ENCODE measurements at regions of chr2 and their contacts with region 1.

Region 1: DNA sequence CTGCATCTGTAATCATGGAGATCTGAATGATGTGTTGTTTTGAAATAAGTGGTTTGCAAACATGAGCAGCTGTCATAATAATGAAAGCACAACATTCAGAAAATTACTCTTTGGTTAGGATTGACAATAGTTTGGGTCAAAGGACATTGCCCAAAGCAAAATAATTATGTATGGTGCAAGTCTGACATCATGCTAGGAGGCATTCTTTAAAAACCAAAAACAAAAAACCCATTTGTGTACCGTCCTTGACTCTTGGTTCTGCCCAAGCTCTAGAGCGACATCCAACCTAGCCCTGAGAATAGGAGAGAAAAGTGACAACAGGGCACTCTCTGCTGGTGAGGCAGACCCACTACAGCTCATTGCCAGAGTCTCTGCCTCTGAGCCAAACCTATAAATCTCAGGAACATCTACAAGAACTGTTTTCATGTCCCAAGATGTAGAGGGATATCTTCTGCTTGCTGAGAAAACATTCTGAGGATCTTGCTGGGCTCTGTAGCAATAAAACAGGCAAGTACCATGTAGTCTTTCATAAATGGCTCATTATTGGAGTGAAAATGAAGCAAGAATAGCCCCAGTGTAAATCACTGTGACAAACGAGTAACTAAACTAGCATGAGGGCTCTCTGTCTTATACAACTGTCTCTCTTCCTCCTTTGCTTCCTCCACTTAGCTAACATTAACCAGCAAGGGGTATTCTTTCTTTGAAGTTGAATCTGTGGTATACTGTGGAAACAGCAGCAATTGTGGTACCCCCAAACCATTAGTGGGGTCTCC is 266.8 kb upstream of the CXCR4 start:
- DNase-seq: no peak
- ATAC-seq: peak; percentile 68
- H3K4me3 ChIP-seq: no peak overlapping the region
- H3K27ac ChIP-seq: no peak overlapping the region
- H3K4me1 ChIP-seq: peaks cover 21% of the 10 kb centered on the region
- H3K27me3 ChIP-seq: no peaks in the 10 kb centered on the region
- CTCF ChIP-seq: peak; percentile 83 to 92 (median 87)
- EP300 ChIP-seq: peak; percentile 28 to 37; a peak in 1 of 4 replicates
- POLR2A ChIP-seq: no peak
- RAD21 ChIP-seq: peak; percentile 91

Region 2: GRCh38 chr2:135473567-135473966 is 911.1 kb before region 1 on chr2:
- CTCF ChIA-PET with region 1: interaction called, 12 read pairs
- POLR2A ChIA-PET with region 1: no interaction called
- RAD21 ChIA-PET with region 1: interaction called, 6 read pairs
- SMC1A ChIA-PET with region 1: no interaction called
- in situ Hi-C with region 1: no loop called
- intact Hi-C with region 1: no loop called
- DNase-seq: peak; percentile 5
- ATAC-seq: peak; percentile 86
- H3K4me3 ChIP-seq: no peak overlapping the region
- H3K27ac ChIP-seq: no peak overlapping the region
- H3K4me1 ChIP-seq: no peaks in the 10 kb centered on the region
- H3K27me3 ChIP-seq: no peaks in the 10 kb centered on the region
- CTCF ChIP-seq: peak; percentile 52 to 76 (median 62)
- EP300 ChIP-seq: no peak
- POLR2A ChIP-seq: no peak
- RAD21 ChIP-seq: peak; percentile 85

Region 3: GRCh38 chr2:135870571-135870970 is 514.1 kb before region 1 on chr2:
- CTCF ChIA-PET with region 1: interaction called, 8 read pairs
- POLR2A ChIA-PET with region 1: interaction called, 5 read pairs
- RAD21 ChIA-PET with region 1: interaction called, 11 read pairs
- SMC1A ChIA-PET with region 1: interaction called, 10 read pairs
- in situ Hi-C with region 1: no loop called
- intact Hi-C with region 1: no loop called
- DNase-seq: no peak
- ATAC-seq: peak; percentile 63
- H3K4me3 ChIP-seq: no peak overlapping the region
- H3K27ac ChIP-seq: no peak overlapping the region
- H3K4me1 ChIP-seq: peaks cover 4% of the 10 kb centered on the region; the same call in 1 of the 2 replicates
- H3K27me3 ChIP-seq: no peaks in the 10 kb centered on the region
- CTCF ChIP-seq: no peak
- EP300 ChIP-seq: no peak
- POLR2A ChIP-seq: no peak
- RAD21 ChIP-seq: no peak

Region 4: GRCh38 chr2:135948642-135949355 is 435.9 kb before region 1 on chr2:
- CTCF ChIA-PET with region 1: interaction called, 6 read pairs
- POLR2A ChIA-PET with region 1: interaction called, 4 read pairs
- RAD21 ChIA-PET with region 1: interaction called, 4 read pairs
- SMC1A ChIA-PET with region 1: interaction called, 10 read pairs
- in situ Hi-C with region 1: no loop called
- intact Hi-C with region 1: no loop called
- DNase-seq: no peak
- ATAC-seq: peak; percentile 81
- H3K4me3 ChIP-seq: no peak overlapping the region
- H3K27ac ChIP-seq: no peak overlapping the region
- H3K4me1 ChIP-seq: peaks cover 3% of the 10 kb centered on the region
- H3K27me3 ChIP-seq: no peaks in the 10 kb centered on the region
- CTCF ChIP-seq: no peak
- EP300 ChIP-seq: peak in 1 of 2 experiments; percentile 78; a peak in 1 of 4 replicates
- POLR2A ChIP-seq: no peak
- RAD21 ChIP-seq: no peak

Region 5: DNA sequence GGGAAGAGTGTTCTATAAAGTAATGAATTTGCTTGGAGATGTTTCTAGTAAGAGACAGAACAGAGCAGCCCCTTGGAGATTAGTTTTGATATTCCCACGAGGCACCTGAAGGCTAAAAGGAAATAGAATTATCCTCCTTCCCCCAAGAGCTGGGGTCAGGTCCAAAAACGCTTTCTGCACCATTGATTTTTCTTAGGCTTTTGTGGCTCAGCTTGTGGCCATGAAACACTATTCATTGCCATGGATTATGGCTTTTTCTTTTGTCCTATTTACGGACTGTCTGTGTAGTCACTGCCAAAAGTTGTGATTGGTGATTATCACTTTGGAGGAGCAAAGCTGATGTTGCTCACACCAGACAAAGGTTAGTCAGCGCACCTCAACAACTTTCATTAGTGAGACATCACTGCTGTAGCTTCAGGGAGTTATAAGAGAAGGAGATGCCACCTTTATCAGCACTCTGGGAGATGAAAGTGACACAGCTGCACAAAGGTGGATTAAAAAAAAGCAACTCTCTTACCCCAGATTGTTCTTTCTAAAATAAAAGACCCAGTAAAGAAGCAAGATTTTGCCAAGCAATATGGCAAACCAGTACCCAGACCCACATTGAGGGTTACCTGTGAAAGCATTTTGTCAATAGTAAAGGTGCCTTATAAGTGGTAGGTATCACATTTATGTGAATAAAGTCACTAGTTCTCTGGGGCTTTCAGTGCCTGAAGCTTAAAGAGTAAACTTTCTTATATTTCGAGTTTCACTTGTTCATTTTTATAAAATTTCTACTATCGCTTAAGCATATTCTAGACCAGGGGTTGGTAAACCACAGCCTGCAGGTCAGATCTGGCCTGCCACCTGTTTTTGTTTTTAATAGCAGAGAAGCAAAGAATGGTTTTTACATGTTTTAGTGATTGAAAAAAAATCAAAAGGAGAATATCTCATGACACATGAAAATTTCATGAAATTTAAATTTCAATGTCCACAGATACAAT is 277.4 kb before region 1 on chr2:
- CTCF ChIA-PET with region 1: interaction called, 9 read pairs
- POLR2A ChIA-PET with region 1: no interaction called
- RAD21 ChIA-PET with region 1: interaction called, 9 read pairs
- SMC1A ChIA-PET with region 1: interaction called, 15 read pairs
- in situ Hi-C with region 1: no loop called
- intact Hi-C with region 1: no loop called
- DNase-seq: no peak
- ATAC-seq: peak; percentile 68
- H3K4me3 ChIP-seq: no peak overlapping the region
- H3K27ac ChIP-seq: no peak overlapping the region
- H3K4me1 ChIP-seq: peaks cover 15% of the 10 kb centered on the region; the same call in 1 of the 2 replicates
- H3K27me3 ChIP-seq: no peaks in the 10 kb centered on the region
- CTCF ChIP-seq: no peak
- EP300 ChIP-seq: peak in 1 of 2 experiments; percentile 59; a peak in 2 of 4 replicates
- POLR2A ChIP-seq: no peak
- RAD21 ChIP-seq: no peak

Region 6: GRCh38 chr2:136238286-136239078 is 146.2 kb before region 1 on chr2:
- CTCF ChIA-PET with region 1: interaction called, 6 read pairs
- POLR2A ChIA-PET with region 1: interaction called, 4 read pairs
- RAD21 ChIA-PET with region 1: interaction called, 4 read pairs
- SMC1A ChIA-PET with region 1: interaction called, 20 read pairs
- in situ Hi-C with region 1: no loop called
- intact Hi-C with region 1: no loop called
- DNase-seq: peak; percentile 78
- ATAC-seq: peak; percentile 89
- H3K4me3 ChIP-seq: no peak overlapping the region
- H3K27ac ChIP-seq: no peak overlapping the region
- H3K4me1 ChIP-seq: peaks cover 18% of the 10 kb centered on the region
- H3K27me3 ChIP-seq: no peaks in the 10 kb centered on the region
- CTCF ChIP-seq: no peak
- EP300 ChIP-seq: peak; percentile 97 to 99
- POLR2A ChIP-seq: no peak
- RAD21 ChIP-seq: no peak

Measured in GM12878 (cell line).